Left ventricle myocardium superior (tissue), 1 donor: ENCODE measurements at regions of chr12 and their contacts with region 1.

Region 1: DNA sequence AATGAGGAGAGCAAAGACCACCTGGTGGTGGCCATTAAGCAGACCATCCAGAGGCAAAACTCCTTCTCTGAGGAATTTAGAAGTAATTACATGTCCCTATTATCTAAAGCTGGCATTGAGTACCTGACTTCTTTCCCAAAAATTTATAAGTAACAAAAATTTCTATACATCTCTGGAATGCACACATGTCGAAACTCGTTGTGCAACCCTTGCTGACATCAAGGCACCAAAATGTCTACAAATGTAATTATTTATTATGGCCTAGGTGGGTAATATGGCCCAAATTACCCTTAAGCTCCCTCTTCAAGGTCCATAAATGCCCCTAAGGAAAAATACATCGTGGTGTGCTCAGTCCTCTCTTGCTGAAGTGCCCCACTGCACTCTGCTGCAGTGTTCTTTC is 43.1 kb upstream of the GUCY2C start:
- DNase-seq: no peak
- ATAC-seq: no peak

Region 2: DNA sequence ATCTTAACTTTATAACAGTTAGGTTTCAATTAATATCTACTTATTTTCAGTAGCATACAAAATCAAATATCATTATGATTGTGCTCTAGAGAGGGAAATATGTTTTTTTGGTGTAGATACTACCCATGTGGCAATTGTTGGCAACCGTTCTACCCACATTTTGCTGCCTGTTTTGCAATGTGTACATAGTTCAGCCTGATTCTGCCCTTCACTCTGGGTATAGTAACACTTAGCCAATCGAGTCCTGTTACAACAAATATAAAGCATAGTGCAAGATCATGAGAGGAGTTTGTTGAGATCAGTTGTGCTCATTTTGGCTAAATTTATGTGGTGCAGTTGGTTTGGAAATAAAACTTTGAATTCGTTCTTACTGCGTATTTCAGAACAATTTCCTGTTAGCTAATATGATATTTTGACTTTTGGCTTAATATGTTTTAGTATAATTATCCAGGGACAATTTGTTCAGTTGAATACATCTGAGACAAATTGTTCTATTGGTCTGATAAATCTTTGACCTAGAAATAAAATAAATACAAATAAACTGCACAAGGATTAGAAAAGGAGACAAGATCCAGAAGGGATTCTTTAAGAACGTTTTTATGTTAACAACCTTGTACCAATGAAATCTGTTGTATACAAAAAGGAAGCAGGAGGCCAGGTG is 297.1 kb before region 1 on chr12:
- intact Hi-C with region 1: no loop called
- DNase-seq: no peak
- ATAC-seq: peak; percentile 48

Region 3: DNA sequence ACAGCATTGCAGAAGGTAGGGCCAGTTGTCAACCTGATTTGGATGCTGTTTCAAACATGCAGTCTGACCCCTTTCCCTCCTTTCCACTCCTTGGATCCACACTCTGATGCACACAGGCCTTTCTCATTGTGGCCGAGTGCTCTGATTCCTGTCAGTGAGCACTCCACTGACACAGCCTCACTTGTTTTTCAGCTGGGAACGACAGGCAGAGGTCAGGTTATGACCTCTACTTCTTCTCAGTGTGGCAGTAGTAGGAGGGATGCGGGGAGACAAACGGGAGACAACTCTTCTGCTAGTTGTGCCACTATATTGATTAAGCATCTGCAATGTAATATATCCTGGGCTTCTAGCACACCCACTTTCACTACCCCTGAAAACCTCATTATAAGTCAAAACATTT is 1233.4 kb after region 1 on chr12:
- intact Hi-C with region 1: loop called (anchors 5 kb)
- DNase-seq: no peak
- ATAC-seq: no peak